ENCODE measurements at regions of chr13 and their contacts with region 1.

Region 1: DNA sequence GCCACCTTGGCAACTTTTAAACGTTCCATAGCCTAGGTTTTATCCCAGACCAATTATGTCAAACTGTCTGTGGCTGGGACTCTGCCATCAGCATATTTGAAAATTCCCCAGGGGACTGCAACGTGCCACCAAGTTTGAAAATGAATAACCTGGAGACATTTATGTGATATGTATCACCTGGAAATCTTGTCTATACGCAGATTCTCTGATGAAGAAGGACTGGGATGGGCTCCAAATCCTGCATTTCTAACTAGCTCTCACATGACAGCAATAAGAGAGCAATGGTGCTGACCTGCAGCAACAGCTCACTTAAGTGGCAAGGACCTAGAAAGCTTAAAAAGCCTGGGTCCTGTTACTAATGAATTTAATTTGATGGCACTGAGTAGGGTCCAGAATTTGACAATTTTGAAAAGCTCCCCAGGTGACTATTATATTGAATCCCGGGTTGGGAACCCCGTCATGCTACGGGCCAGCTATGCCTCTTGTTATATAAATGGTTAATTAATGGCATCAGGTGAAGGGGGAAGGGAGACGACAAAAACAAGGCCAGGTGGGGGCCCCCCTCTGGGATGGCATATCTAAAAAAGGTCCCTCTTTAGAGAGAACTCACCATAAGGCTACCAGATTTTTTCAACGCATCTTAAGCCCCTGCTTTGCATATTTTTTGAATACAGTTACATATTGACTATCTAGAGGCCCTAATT is 213.7 kb downstream of the ZIC5 start:
- DNase-seq: peak in 1 of 2 experiments; percentile 42
- H3K4me3 ChIP-seq: no peak overlapping the region
- H3K27ac ChIP-seq: no peak overlapping the region
- H3K4me1 ChIP-seq: peaks cover 0 to 2% (median 0%) of the 10 kb centered on the region in 4 experiments; a peak in 1 of 7 replicates
- H3K27me3 ChIP-seq: no peaks in the 10 kb centered on the region
- CTCF ChIP-seq: no peak
- EP300 ChIP-seq: no peak
- POLR2A ChIP-seq: no peak
- RAD21 ChIP-seq: no peak

Region 2: DNA sequence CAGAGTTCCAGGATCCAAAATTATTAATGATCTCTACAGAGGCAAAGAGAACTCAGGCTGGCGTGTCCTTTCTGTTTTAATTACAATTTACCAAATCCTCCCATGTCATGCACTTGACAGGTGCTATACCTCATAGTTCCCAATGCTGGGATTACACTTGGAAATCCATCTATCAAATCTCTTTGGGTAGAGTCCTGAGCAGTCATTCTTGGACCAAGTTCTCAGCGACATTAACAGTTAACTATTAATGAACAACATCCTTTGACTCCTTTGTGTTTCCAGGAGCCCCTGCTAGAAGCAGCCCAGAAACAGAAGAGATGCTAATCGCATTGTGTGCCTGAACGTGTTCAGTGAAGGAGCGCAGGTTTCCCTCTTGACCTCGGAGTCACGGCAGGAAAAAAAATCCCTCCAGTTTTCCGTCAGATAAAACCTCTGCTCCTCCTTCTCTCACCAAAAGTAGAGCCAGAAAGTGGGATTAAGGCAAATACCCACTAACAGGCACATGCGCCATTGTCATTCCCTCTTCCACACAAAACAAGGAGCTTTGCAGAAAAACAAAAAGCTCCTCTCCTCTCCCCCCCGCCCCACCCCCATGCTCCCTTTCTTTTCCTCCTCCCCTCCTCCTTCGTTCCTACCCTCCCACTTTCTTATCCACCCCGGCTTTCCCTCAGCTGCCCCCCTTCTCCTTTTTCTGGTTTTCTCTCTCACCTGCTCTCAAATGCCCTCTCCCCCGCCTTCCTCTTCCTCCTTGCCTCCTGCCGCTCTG is 11.1 kb before region 1 on chr13:
- CTCF ChIA-PET with region 1: interaction called, 5 read pairs
- POLR2A ChIA-PET with region 1: interaction called, 12 read pairs
- DNase-seq: peak; percentile 31 to 65
- H3K4me3 ChIP-seq: peak overlapping the region in 3 of 4 experiments; percentile 8 to 50 (median 9); a peak in 5 of 8 replicates
- H3K27ac ChIP-seq: peak overlapping the region; percentile 91
- H3K4me1 ChIP-seq: peaks cover 12 to 39% (median 28%) of the 10 kb centered on the region in 4 experiments; a peak in 6 of 7 replicates
- H3K27me3 ChIP-seq: no peaks in the 10 kb centered on the region
- CTCF ChIP-seq: no peak
- EP300 ChIP-seq: no peak
- POLR2A ChIP-seq: peak; percentile 36 to 66; a peak in 2 of 3 replicates
- RAD21 ChIP-seq: no peak